Caco-2 (cell line): ENCODE measurements at regions of chr11 and their contacts with region 1.

Region 1: DNA sequence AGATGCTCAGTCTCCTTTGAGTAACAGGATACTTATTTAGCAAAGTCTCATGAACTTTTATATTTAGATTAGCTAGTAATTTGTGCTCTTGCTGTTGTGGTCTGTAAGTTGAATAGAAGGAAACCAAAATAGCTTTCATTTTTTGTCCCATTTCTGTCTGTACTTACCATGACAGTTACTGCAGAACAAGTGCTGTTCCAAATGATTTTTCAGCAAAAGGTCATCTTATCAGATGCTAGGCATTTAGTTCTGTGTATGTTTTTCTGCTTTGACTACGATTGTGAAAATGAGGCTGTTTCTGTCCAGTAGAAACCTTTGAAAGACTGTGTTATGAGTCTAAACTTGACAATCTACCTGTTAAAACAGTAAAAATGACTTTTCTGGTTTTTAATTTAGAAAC is 53.8 kb upstream of the NOX4 start:
- DNase-seq: no peak
- H3K4me3 ChIP-seq: no peak overlapping the region
- H3K4me3 Mint-ChIP-seq: no peak overlapping the region
- H3K27ac Mint-ChIP-seq: no peak overlapping the region
- H3K4me1 ChIP-seq: peaks cover 8% of the 10 kb centered on the region
- H3K4me1 Mint-ChIP-seq: peaks cover 25% of the 10 kb centered on the region
- H3K27me3 ChIP-seq: no peaks in the 10 kb centered on the region
- H3K27me3 Mint-ChIP-seq: no peaks in the 10 kb centered on the region
- CTCF ChIP-seq: no peak

Region 2: DNA sequence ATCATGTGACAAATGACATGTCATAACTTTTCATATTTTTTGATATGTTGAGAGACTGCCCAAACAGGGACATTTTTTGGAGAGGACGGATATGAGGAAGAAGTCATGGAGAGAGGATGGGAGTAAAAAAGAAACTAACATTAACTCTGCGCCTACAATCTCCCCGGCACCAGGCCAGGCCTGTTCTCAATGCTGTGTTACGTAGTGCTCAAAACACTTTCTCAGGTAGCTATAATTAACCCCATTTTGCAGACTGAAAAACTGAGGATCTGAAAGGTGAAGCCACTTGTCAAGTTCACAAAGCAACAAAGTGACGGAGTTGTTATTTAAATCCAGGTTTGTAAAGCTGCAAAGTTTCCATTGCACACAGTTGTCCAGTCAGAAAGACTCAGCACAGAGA is 36.4 kb before region 1 on chr11:
- CTCF ChIA-PET with region 1: no interaction called
- POLR2A ChIA-PET with region 1: no interaction called
- intact Hi-C with region 1: no loop called
- DNase-seq: no peak
- H3K4me3 ChIP-seq: no peak overlapping the region
- H3K4me3 Mint-ChIP-seq: no peak overlapping the region
- H3K27ac Mint-ChIP-seq: no peak overlapping the region
- H3K4me1 ChIP-seq: peaks cover 14% of the 10 kb centered on the region; the same call in 1 of the 2 replicates
- H3K4me1 Mint-ChIP-seq: peaks cover 21% of the 10 kb centered on the region
- H3K27me3 ChIP-seq: no peaks in the 10 kb centered on the region
- H3K27me3 Mint-ChIP-seq: no peaks in the 10 kb centered on the region
- CTCF ChIP-seq: no peak

Region 3: DNA sequence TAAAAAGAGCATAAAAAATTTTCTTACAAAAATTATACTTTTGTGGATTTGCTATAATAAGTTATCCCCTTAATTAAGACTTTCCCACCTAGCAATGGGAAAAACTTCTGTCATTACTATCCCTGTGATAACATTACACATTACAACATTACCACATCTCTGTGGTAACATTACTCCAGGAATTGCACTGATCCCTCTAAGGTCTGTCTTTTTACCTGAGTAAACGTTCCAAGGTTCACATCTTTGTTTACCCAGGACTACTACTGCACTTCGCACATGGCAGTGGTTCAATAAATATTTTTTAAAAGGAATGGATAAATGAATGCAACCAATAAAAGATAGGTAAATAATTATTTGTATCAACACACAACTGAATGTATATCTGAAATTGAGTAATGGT is 38.6 kb after region 1 on chr11:
- CTCF ChIA-PET with region 1: no interaction called
- POLR2A ChIA-PET with region 1: no interaction called
- intact Hi-C with region 1: loop called (anchors 1 kb)
- DNase-seq: peak in 1 of 2 experiments; percentile 38
- H3K4me3 ChIP-seq: no peak overlapping the region
- H3K4me3 Mint-ChIP-seq: no peak overlapping the region
- H3K27ac Mint-ChIP-seq: no peak overlapping the region
- H3K4me1 ChIP-seq: peaks cover 7% of the 10 kb centered on the region; the same call in 1 of the 2 replicates
- H3K4me1 Mint-ChIP-seq: peaks cover 20% of the 10 kb centered on the region
- H3K27me3 ChIP-seq: no peaks in the 10 kb centered on the region
- H3K27me3 Mint-ChIP-seq: no peaks in the 10 kb centered on the region
- CTCF ChIP-seq: no peak